Endothelial cell of umbilical vein (primary cell): ENCODE measurements at regions of chr11 and their contacts with region 1.

Region 1: GRCh38 chr11:83827940-83828554 is 541.9 kb upstream of the CCDC90B start:
- DNase-seq: peak; percentile 43
- H3K4me3 ChIP-seq: no peak overlapping the region
- H3K27ac ChIP-seq: no peak overlapping the region
- H3K4me1 ChIP-seq: no peaks in the 10 kb centered on the region
- H3K27me3 ChIP-seq: no peaks in the 10 kb centered on the region
- CTCF ChIP-seq: peak; percentile 31 to 42
- POLR2A ChIP-seq: no peak

Region 2: GRCh38 chr11:84564180-84564866 is 736.3 kb after region 1 on chr11:
- CTCF ChIA-PET with region 1: interaction called, 9 read pairs
- POLR2A ChIA-PET with region 1: no interaction called
- dilution Hi-C with region 1: no loop called
- intact Hi-C with region 1: loop called (anchors 1 kb)
- DNase-seq: peak; percentile 55
- H3K4me3 ChIP-seq: no peak overlapping the region
- H3K27ac ChIP-seq: no peak overlapping the region
- H3K4me1 ChIP-seq: no peaks in the 10 kb centered on the region
- H3K27me3 ChIP-seq: no peaks in the 10 kb centered on the region
- CTCF ChIP-seq: peak; percentile 52 to 67
- POLR2A ChIP-seq: no peak